GM10248 (cell line): ENCODE measurements at regions of chr15 and their contacts with region 1.

Region 1: GRCh38 chr15:78979456-78980320 is 34.8 kb upstream of the CTSH start:
- DNase-seq: peak; percentile 64
- CTCF ChIP-seq: peak; percentile 57

Region 2: DNA sequence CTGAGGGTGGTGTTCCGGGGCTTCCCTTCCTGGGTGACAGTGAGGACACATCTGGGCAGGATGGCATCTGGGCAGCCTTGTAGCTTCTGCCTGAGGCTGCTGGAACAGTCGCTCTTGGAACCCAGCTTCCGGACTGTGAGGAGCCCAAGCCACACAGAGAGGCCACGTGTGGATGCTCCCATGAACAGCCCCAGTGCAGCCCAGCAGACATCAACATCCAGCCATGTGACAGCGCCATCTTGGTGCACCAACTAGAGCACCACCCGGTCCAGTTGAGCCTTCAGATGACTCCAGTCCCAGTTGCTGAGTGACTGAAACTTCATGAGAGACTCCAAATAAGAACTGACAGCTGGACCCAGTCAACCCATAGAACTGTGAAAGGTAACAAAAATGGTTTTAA is 19.4 kb before region 1 on chr15:
- CTCF ChIA-PET with region 1: interaction called, 14 read pairs
- POLR2A ChIA-PET with region 1: no interaction called
- DNase-seq: no peak
- CTCF ChIP-seq: no peak

Region 3: GRCh38 chr15:78968539-78969271 is 11.0 kb before region 1 on chr15:
- CTCF ChIA-PET with region 1: interaction called, 23 read pairs
- POLR2A ChIA-PET with region 1: no interaction called
- DNase-seq: no peak
- CTCF ChIP-seq: no peak

Region 4: GRCh38 chr15:78996894-78997275 is 17.2 kb after region 1 on chr15:
- CTCF ChIA-PET with region 1: interaction called, 34 read pairs
- POLR2A ChIA-PET with region 1: no interaction called
- DNase-seq: no peak
- CTCF ChIP-seq: no peak

Region 5: DNA sequence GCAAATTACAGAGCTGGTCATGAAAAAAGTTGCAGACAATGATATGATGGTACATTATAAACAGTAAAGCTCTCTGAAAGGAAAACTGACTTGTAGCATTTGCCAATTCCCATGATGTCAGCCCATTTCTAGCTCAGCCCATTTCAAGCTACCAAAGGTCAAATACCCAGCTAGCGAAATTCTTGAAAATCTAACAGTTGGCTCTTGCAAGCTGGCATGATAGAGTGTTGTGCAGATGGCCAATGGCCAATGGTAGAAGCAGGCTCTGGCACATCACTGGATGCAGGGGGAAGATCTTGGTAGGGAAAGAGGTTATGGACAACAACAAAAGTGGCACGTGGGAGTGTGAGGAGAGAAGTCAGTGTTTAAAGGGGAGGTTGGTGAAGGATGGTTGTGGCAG is 74.2 kb after region 1 on chr15:
- CTCF ChIA-PET with region 1: no interaction called
- POLR2A ChIA-PET with region 1: no interaction called
- DNase-seq: no peak
- CTCF ChIP-seq: no peak